Common myeloid progenitor, CD34-positive (primary cell): ENCODE measurements at regions of chr10 and their contacts with region 1.

Region 1: DNA sequence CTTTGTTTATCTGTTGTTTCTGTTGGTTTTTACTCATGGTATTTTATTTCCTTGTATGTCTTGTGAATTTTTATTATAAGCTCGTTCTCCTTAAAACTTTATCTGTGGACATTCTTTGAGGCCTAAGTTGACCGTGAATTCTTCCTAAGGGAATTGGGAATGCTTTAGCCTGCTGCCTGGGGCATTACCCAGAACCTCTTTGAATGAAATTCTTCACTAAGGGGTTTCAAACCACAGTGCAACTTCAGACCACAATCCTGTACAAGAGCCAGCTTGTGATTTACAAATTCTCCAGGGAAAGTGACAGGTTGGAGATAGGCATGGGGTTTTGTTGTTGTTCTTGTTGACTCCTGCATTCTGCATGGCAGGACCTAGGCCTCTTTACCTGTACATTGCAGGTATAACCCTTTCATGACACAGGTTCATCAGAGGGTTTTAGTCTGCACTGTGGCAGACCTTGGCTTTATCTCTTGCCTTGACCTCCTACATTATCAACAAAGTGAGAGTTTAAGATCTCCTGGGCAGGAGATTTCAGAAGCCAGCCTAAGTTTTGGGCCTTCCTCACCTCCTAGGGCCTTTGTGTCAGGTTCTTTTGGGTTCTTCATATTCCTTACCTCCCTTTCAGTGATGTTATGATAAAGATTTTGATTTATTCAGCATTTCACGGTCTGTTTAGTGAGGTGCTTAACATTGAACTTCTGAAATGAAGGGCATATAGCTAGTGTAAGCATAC is 70.2 kb downstream of the ABCC2 start:
- DNase-seq: no peak
- H3K4me3 ChIP-seq: no peak overlapping the region
- H3K27ac ChIP-seq: no peak overlapping the region
- H3K4me1 ChIP-seq: no peaks in the 10 kb centered on the region
- H3K27me3 ChIP-seq: peaks cover 0 to under 1% (median 0%) of the 10 kb centered on the region in 5 experiments

Region 2: DNA sequence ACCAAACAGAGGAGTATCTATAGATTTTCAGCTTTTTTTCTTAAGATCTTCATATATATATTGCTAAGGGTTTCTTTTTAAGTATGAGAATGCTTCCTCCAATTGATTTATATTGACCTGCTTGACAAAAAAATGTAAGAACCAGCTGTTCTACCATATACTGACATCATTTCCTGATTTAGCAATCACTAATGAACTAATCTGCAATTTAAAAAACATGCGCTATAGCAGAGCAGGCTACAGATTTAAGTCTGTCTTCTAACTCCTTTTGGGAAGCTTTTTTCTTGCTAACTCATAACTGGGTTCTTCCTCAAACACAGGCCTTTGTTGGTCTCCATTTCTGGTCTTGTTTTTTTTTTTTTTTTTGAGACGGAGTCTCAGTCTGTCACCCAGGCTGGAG is 37.0 kb before region 1 on chr10:
- CTCF ChIA-PET with region 1: no interaction called
- POLR2A ChIA-PET with region 1: no interaction called
- DNase-seq: peak; percentile 5 to 40 (median 22)
- H3K4me3 ChIP-seq: no peak overlapping the region
- H3K27ac ChIP-seq: no peak overlapping the region
- H3K4me1 ChIP-seq: no peaks in the 10 kb centered on the region
- H3K27me3 ChIP-seq: no peaks in the 10 kb centered on the region

Region 3: DNA sequence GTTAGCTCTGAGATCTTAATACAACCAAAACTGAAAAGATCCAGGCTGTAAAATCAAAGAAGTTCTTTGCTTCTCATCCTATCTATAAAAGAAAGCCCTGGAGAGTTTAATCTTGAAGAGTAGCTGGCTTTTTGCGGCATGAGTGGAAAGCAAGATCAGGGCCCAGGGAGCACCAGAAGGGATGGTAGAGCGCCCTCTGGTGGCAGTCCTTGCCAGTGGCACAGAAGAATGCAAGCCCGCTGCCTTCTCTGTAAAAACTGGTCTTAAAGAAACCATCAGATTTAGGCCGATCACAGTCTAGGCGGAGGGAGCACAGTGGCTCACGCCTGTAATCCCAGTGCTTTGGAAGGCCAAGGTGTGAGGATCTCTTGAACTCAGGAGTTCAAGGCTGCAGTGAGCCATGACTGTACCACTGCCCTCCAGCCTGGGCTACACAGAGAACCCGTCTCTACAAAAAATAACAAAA is 193.4 kb after region 1 on chr10:
- CTCF ChIA-PET with region 1: interaction called, 83 read pairs
- POLR2A ChIA-PET with region 1: no interaction called
- DNase-seq: peak; percentile 74 to 88 (median 83)
- H3K4me3 ChIP-seq: no peak overlapping the region
- H3K27ac ChIP-seq: no peak overlapping the region
- H3K4me1 ChIP-seq: peaks cover 0 to 8% (median 3%) of the 10 kb centered on the region in 4 experiments
- H3K27me3 ChIP-seq: no peaks in the 10 kb centered on the region